Ascending aorta (tissue), 2 donors: ENCODE measurements at regions of chr9 and their contacts with region 1.

Region 1: GRCh38 chr9:130042833-130043653 is at the start of gene FNBP1:
- DNase-seq: peak in 1 of 2 donors; percentile 88
- H3K4me3 ChIP-seq: peak within 1 kb of the TSS; percentile 86 to 94
- H3K27ac ChIP-seq: peak within 1 kb of the TSS; percentile 93 to 95
- H3K4me1 ChIP-seq: peaks cover 3 to 28% of the 10 kb centered on the region in 2 donors
- H3K27me3 ChIP-seq: no peaks in the 10 kb centered on the region
- CTCF ChIP-seq: peak in 1 of 3 experiments; percentile 5
- total RNA-seq, gene FNBP1: 87.2 TPM

Region 2: DNA sequence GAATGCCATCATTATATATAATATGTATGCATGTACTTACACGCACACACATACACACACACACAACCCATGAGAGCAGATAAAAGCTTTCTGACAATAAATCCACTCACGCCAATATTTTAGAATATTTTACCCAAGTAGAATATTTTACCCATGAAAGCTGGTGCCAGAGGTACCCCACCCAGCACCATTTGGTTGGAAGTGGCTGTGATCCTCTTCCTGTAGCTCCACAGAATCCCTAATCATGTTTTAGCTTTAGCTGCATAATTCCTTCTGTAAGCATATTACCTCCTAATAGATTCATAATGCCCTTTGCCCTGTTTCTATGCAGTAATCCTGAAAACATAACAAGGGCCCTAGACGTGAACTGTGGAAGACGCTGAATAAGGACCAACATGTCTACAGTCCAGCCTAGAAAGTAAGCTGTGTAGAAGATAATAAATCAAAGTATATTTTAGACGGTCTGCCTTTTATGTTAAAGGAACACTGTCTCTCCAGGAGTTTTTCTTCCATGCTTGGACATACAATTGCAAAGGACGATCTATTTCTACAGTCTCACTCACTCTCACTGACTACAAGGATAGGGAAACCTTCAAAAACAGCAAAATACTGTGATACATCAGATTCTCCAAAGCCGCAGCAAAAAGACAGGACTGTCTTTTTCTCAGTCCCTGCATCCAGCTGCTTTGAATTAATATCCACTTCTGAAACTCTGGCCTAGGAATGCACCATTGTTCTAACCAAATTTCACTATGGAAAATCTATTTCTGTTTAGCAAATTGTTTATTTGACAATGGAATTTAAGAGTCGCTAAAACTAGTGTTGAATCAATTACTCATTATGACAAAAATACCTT is 109.6 kb before region 1 on chr9:
- intact Hi-C with region 1: loop called (anchors 2 kb)
- DNase-seq: no peak
- H3K4me3 ChIP-seq: no peak overlapping the region
- H3K27ac ChIP-seq: peak overlapping the region; percentile 70
- H3K4me1 ChIP-seq: peaks cover 14 to 47% of the 10 kb centered on the region in 2 donors
- H3K27me3 ChIP-seq: no peaks in the 10 kb centered on the region
- CTCF ChIP-seq: no peak

Region 3: GRCh38 chr9:129968690-129969501 is 74.1 kb before region 1 on chr9:
- intact Hi-C with region 1: loop called (anchors 2 kb)
- DNase-seq: peak in 1 of 2 donors; percentile 66
- H3K4me3 ChIP-seq: no peak overlapping the region
- H3K27ac ChIP-seq: peak overlapping the region; percentile 40 to 42
- H3K4me1 ChIP-seq: peaks cover 3 to 39% of the 10 kb centered on the region in 2 donors
- H3K27me3 ChIP-seq: no peaks in the 10 kb centered on the region
- CTCF ChIP-seq: no peak

Region 4: DNA sequence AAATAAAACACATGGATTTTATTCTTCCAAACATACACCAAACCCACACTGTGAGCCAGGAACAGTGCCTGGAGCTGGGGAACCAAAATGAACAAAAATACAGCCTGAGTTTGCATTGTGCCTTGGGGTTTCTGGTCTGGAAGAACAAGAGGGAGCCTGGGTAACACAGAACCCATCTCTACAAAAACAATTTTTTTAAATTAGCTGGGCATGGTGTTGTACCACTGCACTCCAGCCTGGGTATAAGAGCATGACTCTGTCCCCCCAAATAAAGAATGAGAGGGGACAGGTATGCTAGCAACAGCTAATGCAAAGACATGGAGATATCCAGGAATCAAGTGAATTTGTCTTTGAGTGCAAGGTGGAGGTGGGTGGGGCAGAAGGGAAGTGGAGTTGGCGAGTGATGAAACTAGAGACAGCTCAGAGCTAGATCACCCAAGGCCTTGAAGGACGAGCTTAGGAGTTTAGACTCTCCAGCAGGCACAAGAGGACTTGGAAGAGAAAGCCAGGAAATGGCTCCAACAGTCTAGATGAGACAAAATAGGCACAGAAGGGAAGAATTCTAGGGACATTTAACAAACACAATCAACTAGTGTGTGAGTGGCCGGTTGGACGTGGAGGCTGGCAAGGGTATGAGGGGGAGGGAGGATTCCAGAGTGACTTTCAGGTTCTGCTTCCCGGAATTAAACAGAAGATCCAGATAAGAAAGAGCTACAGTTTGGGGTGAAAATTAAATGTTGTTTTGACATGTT is 47.5 kb before region 1 on chr9:
- intact Hi-C with region 1: loop called (anchors 2 kb)
- DNase-seq: no peak
- H3K4me3 ChIP-seq: no peak overlapping the region
- H3K27ac ChIP-seq: peak overlapping the region; percentile 75 to 88
- H3K4me1 ChIP-seq: peaks cover 5 to 24% of the 10 kb centered on the region in 2 donors
- H3K27me3 ChIP-seq: no peaks in the 10 kb centered on the region
- CTCF ChIP-seq: no peak